ENCODE measurements at regions of chr19 and their contacts with region 1.

Region 1: DNA sequence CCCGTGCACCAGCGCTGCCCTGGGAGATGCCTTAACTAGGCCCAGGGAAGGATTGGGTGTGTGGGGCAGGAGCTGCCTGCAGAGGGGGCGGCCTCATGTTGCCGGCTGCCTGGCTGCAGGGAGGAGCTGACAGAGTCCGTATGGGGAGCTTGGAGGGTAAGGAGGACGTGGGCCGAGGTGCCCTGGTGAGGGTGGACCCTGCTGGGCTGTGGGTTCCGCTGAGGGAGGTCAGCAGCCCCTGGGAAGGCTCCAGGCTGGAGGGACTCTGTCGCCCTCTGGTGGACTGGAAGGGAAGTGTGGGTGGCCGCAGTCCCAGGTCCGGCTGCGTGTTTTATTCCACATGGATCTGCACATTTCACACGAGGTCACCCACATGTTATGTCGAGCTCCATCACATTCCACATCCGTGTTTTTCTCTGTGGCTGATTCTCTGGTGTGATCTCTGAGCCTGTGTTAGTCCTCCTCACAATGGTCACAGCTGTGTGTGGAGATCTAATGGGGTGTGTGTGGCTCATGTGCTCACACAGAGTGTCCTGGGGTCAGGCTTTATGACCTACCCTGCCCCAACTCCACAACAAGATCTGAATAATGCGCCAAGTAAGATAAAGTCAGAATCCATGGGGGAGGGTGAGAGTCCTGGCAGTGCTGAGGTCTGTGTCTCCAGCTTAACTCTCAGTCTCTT is 1.8 kb upstream of the CEACAM8 start:
- DNase-seq: no peak
- H3K4me3 Mint-ChIP-seq: no peak overlapping the region
- H3K27ac Mint-ChIP-seq: no peak overlapping the region
- H3K4me1 Mint-ChIP-seq: no peaks in the 10 kb centered on the region
- H3K27me3 Mint-ChIP-seq: peaks cover 16% of the 10 kb centered on the region

Region 2: GRCh38 chr19:42563352-42564210 is 33.0 kb before region 1 on chr19:
- intact Hi-C with region 1: loop called (anchors 2 kb)
- DNase-seq: no peak
- H3K4me3 Mint-ChIP-seq: no peak overlapping the region
- H3K27ac Mint-ChIP-seq: no peak overlapping the region
- H3K4me1 Mint-ChIP-seq: peaks cover 6% of the 10 kb centered on the region
- H3K27me3 Mint-ChIP-seq: peaks cover 12% of the 10 kb centered on the region

Region 3: DNA sequence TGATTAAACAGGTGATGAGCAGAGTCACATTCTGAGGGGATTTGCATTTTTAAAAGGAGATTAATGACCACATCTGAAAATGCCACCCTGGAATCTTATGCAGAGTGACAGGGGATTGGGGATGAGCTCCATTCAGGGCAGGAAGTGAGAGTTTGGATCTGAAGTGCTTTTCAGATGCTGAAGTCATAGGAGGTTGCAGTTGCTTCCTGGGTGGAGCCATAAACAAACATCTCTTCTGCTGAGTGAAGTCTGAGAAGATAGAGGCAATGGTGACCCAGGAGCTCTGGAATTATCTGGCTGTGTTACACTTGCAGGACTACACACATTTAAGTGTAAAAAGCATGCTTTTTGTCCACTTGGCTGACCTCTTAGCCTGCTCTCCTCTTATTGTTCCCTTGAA is 220.4 kb after region 1 on chr19:
- intact Hi-C with region 1: no loop called
- DNase-seq: no peak
- H3K4me3 Mint-ChIP-seq: no peak overlapping the region
- H3K27ac Mint-ChIP-seq: no peak overlapping the region
- H3K4me1 Mint-ChIP-seq: no peaks in the 10 kb centered on the region
- H3K27me3 Mint-ChIP-seq: no peaks in the 10 kb centered on the region